ENCODE measurements at regions of chr3 and their contacts with region 1.

Region 1: GRCh38 chr3:196502775-196503195 is 783 bp downstream of the RNF168 start:
- DNase-seq: peak; percentile 64
- H3K4me3 Mint-ChIP-seq: peak overlapping the region; percentile 100
- H3K27ac Mint-ChIP-seq: peak overlapping the region; percentile 100
- H3K4me1 Mint-ChIP-seq: peaks cover 38% of the 10 kb centered on the region
- H3K27me3 Mint-ChIP-seq: peaks cover 8% of the 10 kb centered on the region

Region 2: GRCh38 chr3:196179380-196180308 is 323.1 kb before region 1 on chr3:
- intact Hi-C with region 1: loop called (anchors 1 kb)
- DNase-seq: peak; percentile 82
- H3K4me3 Mint-ChIP-seq: peak overlapping the region; percentile 74
- H3K27ac Mint-ChIP-seq: peak overlapping the region; percentile 97
- H3K4me1 Mint-ChIP-seq: peaks cover 61% of the 10 kb centered on the region
- H3K27me3 Mint-ChIP-seq: no peaks in the 10 kb centered on the region

Region 3: GRCh38 chr3:196274585-196274984 is 228.2 kb before region 1 on chr3:
- intact Hi-C with region 1: loop called (anchors 1 kb)
- DNase-seq: peak; percentile 78
- H3K4me3 Mint-ChIP-seq: peak overlapping the region; percentile 79
- H3K27ac Mint-ChIP-seq: peak overlapping the region; percentile 98
- H3K4me1 Mint-ChIP-seq: peaks cover 60% of the 10 kb centered on the region
- H3K27me3 Mint-ChIP-seq: no peaks in the 10 kb centered on the region

Region 4: GRCh38 chr3:196432137-196432879 is 70.5 kb before region 1 on chr3 and contains the start of gene UBXN7:
- intact Hi-C with region 1: loop called (anchors 1 kb)
- DNase-seq: peak; percentile 91
- H3K4me3 Mint-ChIP-seq: peak within 1 kb of the TSS; percentile 86
- H3K27ac Mint-ChIP-seq: peak within 1 kb of the TSS; percentile 97
- H3K4me1 Mint-ChIP-seq: peaks cover 23% of the 10 kb centered on the region
- H3K27me3 Mint-ChIP-seq: peaks cover 10% of the 10 kb centered on the region
- total RNA-seq, gene UBXN7: 54.8 and 60.9 TPM in 2 replicates

Region 5: GRCh38 chr3:196559826-196560225 is 57.0 kb after region 1 on chr3:
- intact Hi-C with region 1: no loop called
- DNase-seq: no peak
- H3K4me3 Mint-ChIP-seq: no peak overlapping the region
- H3K27ac Mint-ChIP-seq: no peak overlapping the region
- H3K4me1 Mint-ChIP-seq: peaks cover 29% of the 10 kb centered on the region
- H3K27me3 Mint-ChIP-seq: no peaks in the 10 kb centered on the region

Region 6: GRCh38 chr3:196632046-196632751 is 129.4 kb after region 1 on chr3:
- intact Hi-C with region 1: loop called (anchors 5 kb)
- DNase-seq: peak; percentile 90
- H3K4me3 Mint-ChIP-seq: peak overlapping the region; percentile 86
- H3K27ac Mint-ChIP-seq: peak overlapping the region; percentile 93
- H3K4me1 Mint-ChIP-seq: peaks cover 52% of the 10 kb centered on the region
- H3K27me3 Mint-ChIP-seq: no peaks in the 10 kb centered on the region

Region 7: DNA sequence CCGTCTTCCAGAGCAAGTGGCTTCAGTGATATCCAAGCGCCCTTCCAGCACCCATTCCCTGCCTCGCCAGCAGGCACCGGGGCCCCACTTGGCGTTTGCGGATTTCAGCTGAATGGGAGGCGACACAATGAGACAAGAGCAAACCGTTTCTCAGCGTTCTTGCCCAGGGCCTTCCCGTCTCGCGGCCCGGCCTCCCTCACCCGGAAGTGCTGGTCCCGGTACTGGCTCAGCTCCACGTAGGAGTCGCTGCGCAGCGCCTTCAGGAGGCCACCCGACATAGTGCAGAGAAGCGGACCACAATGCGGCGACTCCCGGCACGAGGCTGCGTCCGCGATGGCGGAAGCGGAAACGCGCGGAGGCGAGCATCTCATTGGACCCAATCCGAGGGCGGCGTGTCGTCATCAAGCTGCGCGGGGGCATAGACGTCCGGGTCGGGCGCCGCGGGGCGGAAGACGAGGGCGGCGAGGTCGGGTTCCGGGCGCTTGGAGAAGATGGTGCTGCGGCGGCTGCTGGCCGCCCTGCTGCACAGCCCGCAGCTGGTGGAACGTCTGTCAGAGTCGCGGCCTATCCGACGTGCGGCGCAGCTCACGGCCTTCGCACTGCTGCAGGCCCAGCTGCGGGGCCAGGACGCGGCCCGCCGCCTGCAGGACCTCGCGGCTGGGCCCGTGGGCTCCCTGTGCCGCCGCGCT is 439.6 kb after region 1 on chr3 and contains the start of gene NCBP2:
- intact Hi-C with region 1: loop called (anchors 5 kb)
- DNase-seq: peak; percentile 100
- H3K4me3 Mint-ChIP-seq: peak within 1 kb of the TSS; percentile 100
- H3K27ac Mint-ChIP-seq: peak within 1 kb of the TSS; percentile 97
- H3K4me1 Mint-ChIP-seq: peaks cover 55% of the 10 kb centered on the region
- H3K27me3 Mint-ChIP-seq: peaks cover 2% of the 10 kb centered on the region
- total RNA-seq, gene NCBP2: 102 and 111 TPM in 2 replicates